ENCODE measurements at regions of chr16 and their contacts with region 1.

Region 1: GRCh38 chr16:66399930-66400329 is 27.2 kb upstream of the BEAN1 start:
- DNase-seq: peak; percentile 44 to 82
- ATAC-seq: peak; percentile 28 to 83 (median 64)
- H3K4me3 ChIP-seq: no peak overlapping the region
- H3K27ac ChIP-seq: peak overlapping the region in 6 of 10 donors; percentile 9 to 76 (median 66)
- H3K4me1 ChIP-seq: peaks cover 4 to 43% (median 29%) of the 10 kb centered on the region in 9 donors
- H3K27me3 ChIP-seq: no peaks in the 10 kb centered on the region
- CTCF ChIP-seq: no peak

Region 2: GRCh38 chr16:66357153-66357928 is 42.6 kb before region 1 on chr16:
- intact Hi-C with region 1: loop called in 2 of 10 experiments (anchors 1 to 5 kb)
- DNase-seq: peak in 1 of 2 donors; percentile 78
- ATAC-seq: peak in 6 of 8 donors; percentile 17 to 45 (median 32)
- H3K4me3 ChIP-seq: no peak overlapping the region
- H3K27ac ChIP-seq: peak overlapping the region in 5 of 10 donors; percentile 32 to 96 (median 40)
- H3K4me1 ChIP-seq: peaks cover 7 to 59% (median 37%) of the 10 kb centered on the region in 9 donors
- H3K27me3 ChIP-seq: peaks cover 0 to 19% (median 0%) of the 10 kb centered on the region in 7 donors
- CTCF ChIP-seq: peak; percentile 62 to 87 (median 81)

Region 3: GRCh38 chr16:66364117-66364967 is 35.6 kb before region 1 on chr16:
- intact Hi-C with region 1: loop called in 2 of 10 experiments (anchors 1 to 5 kb)
- DNase-seq: peak; percentile 65 to 79
- ATAC-seq: peak; percentile 32 to 56 (median 43)
- H3K4me3 ChIP-seq: peak overlapping the region in 3 of 10 donors; percentile 17 to 33 (median 18)
- H3K27ac ChIP-seq: peak overlapping the region; percentile 72 to 96 (median 88)
- H3K4me1 ChIP-seq: peaks cover 13 to 82% (median 68%) of the 10 kb centered on the region in 9 donors
- H3K27me3 ChIP-seq: peaks cover 0 to 16% (median 0%) of the 10 kb centered on the region in 7 donors
- CTCF ChIP-seq: no peak

Region 4: DNA sequence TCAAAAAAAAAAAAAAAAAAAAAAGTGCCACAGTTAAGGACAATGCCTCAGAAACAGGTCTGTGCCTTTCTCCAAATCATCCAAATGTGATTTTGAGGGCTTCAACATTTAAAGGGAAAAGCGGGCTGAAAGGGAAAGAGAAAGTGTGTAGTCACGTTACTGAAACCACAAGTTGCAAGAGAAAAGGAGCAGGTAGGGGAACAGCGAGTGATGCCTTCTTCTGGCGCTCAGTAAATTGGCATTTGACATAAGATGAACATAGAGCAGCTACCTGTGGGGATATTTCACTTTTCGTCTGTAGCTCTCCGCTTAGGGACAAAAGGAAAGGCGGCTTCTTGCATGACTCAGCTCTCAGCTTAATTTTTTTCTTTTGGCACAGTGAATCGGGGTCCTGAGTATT is 190.4 kb after region 1 on chr16:
- intact Hi-C with region 1: loop called in 1 of 10 experiments (anchors 5 kb)
- DNase-seq: no peak
- ATAC-seq: no peak
- H3K4me3 ChIP-seq: peak overlapping the region in 1 of 10 donors; percentile 4
- H3K27ac ChIP-seq: peak overlapping the region in 1 of 10 donors; percentile 41
- H3K4me1 ChIP-seq: peaks cover 0 to 46% (median 23%) of the 10 kb centered on the region in 9 donors
- H3K27me3 ChIP-seq: no peaks in the 10 kb centered on the region
- CTCF ChIP-seq: no peak

Region 5: DNA sequence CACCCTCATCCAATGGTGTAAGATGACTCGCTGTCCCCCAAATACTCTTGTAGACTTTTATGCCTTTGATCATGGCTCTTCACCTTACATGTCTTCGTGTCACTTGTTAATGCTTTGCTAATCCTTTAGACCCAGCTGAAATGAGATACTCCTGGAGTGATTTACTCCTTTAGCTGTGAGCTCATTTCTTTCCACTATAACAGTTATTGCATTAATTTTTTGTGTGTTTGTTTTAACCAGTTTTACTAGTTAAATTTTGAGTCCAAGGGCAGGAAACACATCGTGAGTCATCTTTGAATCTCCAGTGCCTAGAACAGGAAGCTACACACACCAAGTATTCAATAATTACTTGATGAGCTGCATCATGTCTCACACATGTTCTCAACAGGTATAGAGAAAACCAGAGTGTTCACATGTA is 1155.9 kb after region 1 on chr16:
- intact Hi-C with region 1: loop called in 1 of 10 experiments (anchors 10 kb)
- DNase-seq: no peak
- ATAC-seq: no peak
- H3K4me3 ChIP-seq: no peak overlapping the region
- H3K27ac ChIP-seq: peak overlapping the region in 3 of 10 donors; percentile 33 to 72 (median 35)
- H3K4me1 ChIP-seq: peaks cover 4 to 46% (median 20%) of the 10 kb centered on the region in 9 donors
- H3K27me3 ChIP-seq: no peaks in the 10 kb centered on the region
- CTCF ChIP-seq: no peak

Measured in heart right ventricle (tissue), 16 donors.